GM23248 (cell line): ENCODE measurements at regions of chr17 and their contacts with region 1.

Region 1: DNA sequence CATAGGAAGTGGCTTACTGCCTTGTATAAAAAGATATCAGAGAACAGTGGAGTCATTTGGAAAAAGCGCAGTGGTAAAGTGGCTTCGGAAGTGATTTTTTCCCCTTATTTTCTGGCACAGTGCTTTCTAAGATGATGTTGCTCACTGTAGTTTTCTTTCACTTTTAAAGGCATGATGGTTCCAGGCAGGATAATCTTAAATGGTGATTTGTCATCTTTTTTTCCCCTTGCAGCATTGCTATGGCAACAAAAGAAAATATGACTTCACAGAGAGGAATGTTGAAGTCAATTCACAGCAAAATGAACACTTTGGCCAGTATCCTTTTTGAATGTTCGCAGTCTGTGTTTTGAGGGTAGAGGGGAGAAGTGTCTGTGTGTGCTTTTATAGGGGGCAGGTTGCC is 42.5 kb downstream of the GOSR1 start:
- DNase-seq: peak; percentile 95
- H3K4me3 ChIP-seq: peak overlapping the region; percentile 58
- H3K27ac ChIP-seq: peak overlapping the region; percentile 97
- H3K4me1 ChIP-seq: peaks cover 40% of the 10 kb centered on the region
- H3K27me3 ChIP-seq: no peaks in the 10 kb centered on the region

Region 2: GRCh38 chr17:30161601-30162000 is 358.1 kb before region 1 on chr17:
- in situ Hi-C with region 1: no loop called
- DNase-seq: peak; percentile 12
- H3K4me3 ChIP-seq: no peak overlapping the region
- H3K27ac ChIP-seq: no peak overlapping the region
- H3K4me1 ChIP-seq: peaks cover 7% of the 10 kb centered on the region
- H3K27me3 ChIP-seq: no peaks in the 10 kb centered on the region

Region 3: DNA sequence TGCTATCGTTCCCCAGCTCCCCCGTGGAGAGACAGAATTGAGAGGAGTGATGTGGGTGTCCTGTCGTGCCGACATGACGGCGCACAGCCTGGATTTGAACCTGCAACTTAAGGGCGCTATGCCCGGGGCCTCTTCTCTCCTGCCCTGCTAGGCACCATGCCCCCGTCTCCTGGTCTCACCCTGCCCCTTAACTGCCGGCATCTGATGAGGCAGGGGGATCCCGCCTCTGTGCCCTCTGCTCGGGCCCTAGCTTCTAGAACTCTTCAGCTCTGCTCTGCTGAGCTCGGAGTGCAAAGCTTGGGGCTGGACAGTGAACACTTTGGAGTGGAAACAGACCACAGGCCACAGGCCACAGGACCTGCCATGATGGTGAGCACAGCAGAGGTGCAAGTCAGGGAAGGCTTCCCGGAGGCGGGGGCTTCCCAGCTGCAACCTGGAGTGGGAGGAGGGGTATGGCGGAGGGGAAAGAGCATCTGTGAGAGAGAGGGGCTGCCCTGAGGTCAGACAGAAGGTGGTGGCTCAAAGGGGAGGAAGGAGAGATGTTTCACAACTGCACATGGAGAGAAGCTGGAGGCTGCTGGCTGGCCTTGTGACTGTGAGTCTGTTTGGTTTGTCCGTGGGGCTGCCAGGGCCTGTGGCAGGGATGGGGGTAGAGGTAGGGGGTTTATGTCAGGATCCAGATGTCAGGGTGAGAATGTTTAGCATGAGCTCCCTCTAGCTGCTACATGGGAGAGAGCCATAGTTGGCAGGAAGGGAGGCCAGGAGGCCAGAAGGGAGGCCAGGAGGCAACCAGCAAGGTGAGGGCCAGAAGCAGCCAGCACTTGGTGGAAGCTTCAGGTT is 197.0 kb after region 1 on chr17:
- in situ Hi-C with region 1: loop called (anchors 25 kb)
- DNase-seq: peak; percentile 26
- H3K4me3 ChIP-seq: no peak overlapping the region
- H3K27ac ChIP-seq: no peak overlapping the region
- H3K4me1 ChIP-seq: no peaks in the 10 kb centered on the region
- H3K27me3 ChIP-seq: no peaks in the 10 kb centered on the region

Region 4: DNA sequence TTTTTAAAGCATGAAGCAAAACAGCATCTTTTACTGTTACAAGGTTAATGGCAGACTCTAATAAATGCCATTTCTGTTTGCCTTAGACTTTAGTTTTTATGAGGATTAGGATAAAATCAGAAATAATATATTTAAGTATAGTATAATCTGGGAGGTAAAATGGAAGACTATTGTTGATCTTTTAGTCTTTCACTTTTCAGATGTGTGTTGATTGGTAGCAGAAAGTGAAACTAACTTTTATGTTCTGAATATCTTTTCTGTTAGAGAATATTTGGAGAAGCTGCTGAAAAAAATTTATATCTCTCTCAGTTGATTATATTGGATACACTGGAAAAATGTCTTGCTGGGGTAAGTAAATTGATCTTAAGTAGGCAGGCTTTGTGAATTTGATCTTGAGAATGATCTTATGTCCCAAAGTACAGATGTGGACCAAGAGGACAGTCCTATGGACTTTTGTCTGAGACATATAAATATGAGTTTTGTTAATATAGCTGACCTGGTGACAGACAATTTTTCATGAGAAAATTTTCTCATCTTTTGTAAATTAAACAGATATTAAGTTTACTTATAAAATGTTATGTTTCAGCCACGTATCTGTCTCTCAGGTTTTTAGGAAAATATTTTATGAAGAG is 639.2 kb after region 1 on chr17:
- in situ Hi-C with region 1: no loop called
- DNase-seq: peak; percentile 20
- H3K4me3 ChIP-seq: peak overlapping the region; percentile 21
- H3K27ac ChIP-seq: no peak overlapping the region
- H3K4me1 ChIP-seq: peaks cover 29% of the 10 kb centered on the region
- H3K27me3 ChIP-seq: no peaks in the 10 kb centered on the region